ENCODE measurements at regions of chr2 and their contacts with region 1.

Region 1: GRCh38 chr2:186589612-186590349 is at the start of gene ITGAV:
- DNase-seq: peak; percentile 90
- ATAC-seq: peak; percentile 93
- H3K4me3 ChIP-seq: peak within 1 kb of the TSS; percentile 80
- H3K27ac ChIP-seq: peak within 1 kb of the TSS; percentile 62
- H3K4me1 ChIP-seq: peaks cover 29% of the 10 kb centered on the region
- H3K27me3 ChIP-seq: no peaks in the 10 kb centered on the region
- CTCF ChIP-seq: no peak
- total RNA-seq, gene ITGAV: 23.5 and 25.2 TPM in 2 replicates

Region 2: GRCh38 chr2:186339716-186340115 is 250.1 kb before region 1 on chr2:
- CTCF ChIA-PET with region 1: no interaction called
- POLR2A ChIA-PET with region 1: no interaction called
- intact Hi-C with region 1: no loop called
- DNase-seq: no peak
- ATAC-seq: no peak
- H3K4me3 ChIP-seq: no peak overlapping the region
- H3K27ac ChIP-seq: no peak overlapping the region
- H3K4me1 ChIP-seq: peaks cover 7% of the 10 kb centered on the region; the same call in 1 of the 2 replicates
- H3K27me3 ChIP-seq: no peaks in the 10 kb centered on the region
- CTCF ChIP-seq: no peak

Region 3: DNA sequence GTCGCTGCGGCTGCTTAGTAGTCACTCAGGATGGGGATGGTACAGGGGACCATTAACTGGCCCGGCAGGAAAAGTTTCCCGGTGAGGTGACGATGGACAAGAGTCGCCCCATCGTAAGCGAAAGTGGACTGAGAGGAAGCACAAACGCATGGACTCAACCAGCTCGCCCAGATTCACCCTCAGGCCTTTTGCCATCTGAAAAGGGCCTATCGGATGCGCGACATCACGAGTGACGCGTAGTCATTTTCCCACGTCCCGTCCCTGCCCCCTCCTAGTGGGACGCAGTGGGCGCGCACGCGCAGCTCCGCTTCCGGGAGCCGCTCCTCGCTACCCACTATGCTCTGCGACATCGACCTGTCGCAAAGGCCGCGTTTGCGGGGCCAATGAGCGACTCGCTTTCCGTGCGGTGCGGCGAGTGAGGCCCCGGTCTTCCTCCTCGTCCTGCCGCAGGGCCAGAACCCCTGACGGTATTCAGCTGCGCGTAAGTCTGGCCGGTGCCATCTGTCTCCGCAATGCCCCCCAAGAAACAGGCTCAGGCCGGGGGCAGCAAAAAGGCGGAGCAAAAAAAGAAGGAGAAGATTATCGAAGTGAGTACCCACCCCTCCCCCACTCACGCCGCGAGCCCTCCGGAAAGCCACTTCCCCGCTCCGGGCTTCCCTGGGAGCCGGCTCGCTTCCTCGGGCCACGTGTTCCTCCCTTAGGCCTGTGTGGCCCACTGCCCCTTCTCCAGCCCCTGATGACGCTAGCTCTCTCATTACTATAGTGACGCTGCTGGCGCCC is 103.7 kb before region 1 on chr2 and contains the start of gene ZC3H15:
- CTCF ChIA-PET with region 1: no interaction called
- POLR2A ChIA-PET with region 1: no interaction called
- intact Hi-C with region 1: loop called (anchors 5 kb)
- DNase-seq: peak; percentile 98
- ATAC-seq: peak; percentile 95
- H3K4me3 ChIP-seq: peak within 1 kb of the TSS; percentile 90
- H3K27ac ChIP-seq: peak within 1 kb of the TSS; percentile 72
- H3K4me1 ChIP-seq: peaks cover 22% of the 10 kb centered on the region
- H3K27me3 ChIP-seq: no peaks in the 10 kb centered on the region
- CTCF ChIP-seq: no peak
- total RNA-seq, gene ZC3H15: 58.2 and 64.9 TPM in 2 replicates

Region 4: GRCh38 chr2:186503848-186504606 is 85.8 kb before region 1 on chr2:
- CTCF ChIA-PET with region 1: no interaction called
- POLR2A ChIA-PET with region 1: no interaction called
- intact Hi-C with region 1: loop called (anchors 5 kb)
- DNase-seq: peak; percentile 67
- ATAC-seq: peak; percentile 49
- H3K4me3 ChIP-seq: no peak overlapping the region
- H3K27ac ChIP-seq: no peak overlapping the region
- H3K4me1 ChIP-seq: no peaks in the 10 kb centered on the region
- H3K27me3 ChIP-seq: no peaks in the 10 kb centered on the region
- CTCF ChIP-seq: peak; percentile 77

Region 5: GRCh38 chr2:186518945-186519344 is 70.8 kb before region 1 on chr2:
- CTCF ChIA-PET with region 1: no interaction called
- POLR2A ChIA-PET with region 1: no interaction called
- intact Hi-C with region 1: loop called (anchors 5 kb)
- DNase-seq: no peak
- ATAC-seq: no peak
- H3K4me3 ChIP-seq: no peak overlapping the region
- H3K27ac ChIP-seq: no peak overlapping the region
- H3K4me1 ChIP-seq: no peaks in the 10 kb centered on the region
- H3K27me3 ChIP-seq: no peaks in the 10 kb centered on the region
- CTCF ChIP-seq: no peak

Region 6: GRCh38 chr2:186618696-186619095 is 28.9 kb after region 1 on chr2:
- CTCF ChIA-PET with region 1: no interaction called
- POLR2A ChIA-PET with region 1: no interaction called
- intact Hi-C with region 1: no loop called
- DNase-seq: no peak
- ATAC-seq: no peak
- H3K4me3 ChIP-seq: no peak overlapping the region
- H3K27ac ChIP-seq: no peak overlapping the region
- H3K4me1 ChIP-seq: no peaks in the 10 kb centered on the region
- H3K27me3 ChIP-seq: no peaks in the 10 kb centered on the region
- CTCF ChIP-seq: no peak